GM10248 (cell line): ENCODE measurements at regions of chr12 and their contacts with region 1.

Region 1: GRCh38 chr12:43776498-43776897 is 17.7 kb downstream of the IRAK4 start:
- DNase-seq: peak; percentile 21
- CTCF ChIP-seq: peak; percentile 45

Region 2: DNA sequence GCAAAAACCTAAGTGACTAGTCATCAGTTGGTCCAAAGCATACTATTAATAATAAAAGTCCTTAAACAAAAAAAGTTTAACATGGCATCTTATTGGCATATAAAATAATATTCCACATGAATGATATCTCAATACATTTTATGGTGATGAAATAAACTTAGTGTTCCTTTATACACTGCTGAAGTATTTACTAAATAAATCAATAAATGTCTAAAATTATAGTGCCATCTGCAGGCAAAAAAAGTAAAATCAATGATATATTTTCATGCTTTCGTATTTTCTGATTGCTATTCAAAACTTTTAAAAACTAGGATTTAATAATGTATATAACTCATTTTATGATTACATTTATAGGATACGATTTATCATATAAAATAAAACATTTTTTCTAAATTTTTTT is 48.4 kb before region 1 on chr12:
- CTCF ChIA-PET with region 1: no interaction called
- POLR2A ChIA-PET with region 1: no interaction called
- DNase-seq: no peak
- CTCF ChIP-seq: no peak

Region 3: GRCh38 chr12:43789941-43790340 is 13.4 kb after region 1 on chr12:
- CTCF ChIA-PET with region 1: interaction called, 35 read pairs
- POLR2A ChIA-PET with region 1: interaction called, 8 read pairs
- DNase-seq: no peak
- CTCF ChIP-seq: no peak

Region 4: DNA sequence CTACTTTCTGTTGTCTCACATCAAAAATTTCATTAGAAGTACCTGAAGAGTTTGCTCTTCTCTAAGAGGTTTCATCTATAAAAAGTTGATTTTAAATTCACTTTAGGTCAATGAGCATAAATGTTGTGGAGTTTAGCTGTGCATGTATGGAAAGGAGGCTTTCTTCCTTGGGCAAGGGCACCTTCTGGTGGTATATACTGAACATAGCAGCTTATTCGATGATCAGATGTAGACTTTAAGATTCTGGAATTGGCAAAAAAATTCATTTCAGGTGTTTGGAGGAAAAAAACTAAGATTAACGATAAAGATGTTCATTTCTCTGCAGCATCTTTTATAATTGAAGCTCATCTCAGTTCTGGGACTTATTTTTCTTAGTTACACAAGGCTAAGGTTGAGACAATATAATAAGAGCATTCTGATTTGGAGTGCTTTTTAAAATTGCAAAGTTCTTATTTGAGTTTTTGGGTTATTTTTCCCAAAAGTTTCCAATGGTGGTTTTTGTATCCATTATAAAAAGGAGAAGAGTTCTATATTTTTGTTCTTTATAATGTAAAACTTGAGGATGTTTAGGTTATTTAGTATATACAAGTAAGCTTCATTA is 106.2 kb after region 1 on chr12:
- CTCF ChIA-PET with region 1: interaction called, 25 read pairs
- POLR2A ChIA-PET with region 1: no interaction called
- DNase-seq: peak; percentile 55
- CTCF ChIP-seq: peak; percentile 64